ENCODE measurements at regions of chr3 and their contacts with region 1.

Region 1: DNA sequence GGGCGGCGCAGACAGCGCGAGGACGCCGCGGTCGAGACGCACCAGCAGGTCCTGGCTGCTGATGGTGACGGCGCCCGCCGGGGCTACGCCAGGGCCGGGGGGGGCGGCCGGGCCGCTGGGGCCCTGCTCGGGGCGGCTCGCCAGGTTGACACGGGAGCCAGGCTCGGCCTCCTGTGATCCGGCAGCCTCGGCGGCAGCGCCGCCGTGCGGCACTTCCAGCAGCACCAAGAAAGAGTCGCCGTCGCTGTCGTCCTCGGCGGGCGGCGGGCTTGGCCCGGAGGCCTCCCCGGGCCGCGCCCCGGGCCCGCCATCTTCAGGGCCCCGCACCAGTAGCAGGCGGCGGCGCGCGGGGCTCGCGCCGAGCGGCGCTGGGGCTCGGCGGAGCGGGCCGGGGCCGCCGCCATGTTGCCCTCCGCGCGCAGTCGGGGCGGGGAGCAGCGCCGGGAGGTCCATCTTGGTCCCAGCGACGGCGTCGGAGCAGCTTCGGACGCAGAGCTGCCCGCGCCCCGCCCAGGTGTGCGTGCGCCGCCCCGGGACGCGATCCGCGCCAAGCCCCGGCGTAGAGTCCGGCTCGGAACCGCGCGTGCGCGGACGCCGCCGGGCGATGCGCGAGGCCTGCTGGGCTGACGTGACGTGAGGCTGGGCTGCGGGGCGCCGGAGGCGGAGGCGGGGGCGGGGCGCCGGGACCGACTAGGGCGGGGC is at the start of gene ZXDC:
- DNase-seq: peak; percentile 69 to 97
- H3K4me3 ChIP-seq: peak within 1 kb of the TSS; percentile 63 to 71
- H3K27ac ChIP-seq: peak within 1 kb of the TSS; percentile 88 to 99
- H3K4me1 ChIP-seq: peaks cover 27 to 35% of the 10 kb centered on the region in 2 donors
- H3K27me3 ChIP-seq: no peaks in the 10 kb centered on the region
- CTCF ChIP-seq: peak; percentile 14 to 49 (median 37)
- total RNA-seq, gene ZXDC: 74.4 TPM

Region 2: GRCh38 chr3:125916376-125916978 is 559.1 kb before region 1 on chr3:
- intact Hi-C with region 1: loop called (anchors 5 kb)
- DNase-seq: no peak
- H3K4me3 ChIP-seq: peak overlapping the region; percentile 90 to 91
- H3K27ac ChIP-seq: peak overlapping the region; percentile 61 to 67
- H3K4me1 ChIP-seq: peaks cover 0 to 6% of the 10 kb centered on the region in 2 donors
- H3K27me3 ChIP-seq: no peaks in the 10 kb centered on the region
- CTCF ChIP-seq: peak in 1 of 3 experiments; percentile 35

Region 3: GRCh38 chr3:126100634-126101301 is 374.8 kb before region 1 on chr3:
- intact Hi-C with region 1: loop called (anchors 5 kb)
- DNase-seq: peak in 1 of 2 donors; percentile 86
- H3K4me3 ChIP-seq: peak overlapping the region in 1 of 2 donors; percentile 48
- H3K27ac ChIP-seq: peak overlapping the region; percentile 96 to 98
- H3K4me1 ChIP-seq: peaks cover 24 to 46% of the 10 kb centered on the region in 2 donors
- H3K27me3 ChIP-seq: no peaks in the 10 kb centered on the region
- CTCF ChIP-seq: no peak

Region 4: GRCh38 chr3:126212602-126213378 is 262.8 kb before region 1 on chr3:
- intact Hi-C with region 1: loop called (anchors 5 kb)
- DNase-seq: peak in 1 of 2 donors; percentile 77
- H3K4me3 ChIP-seq: peak overlapping the region; percentile 41 to 69
- H3K27ac ChIP-seq: peak overlapping the region; percentile 86 to 89
- H3K4me1 ChIP-seq: peaks cover 9 to 33% of the 10 kb centered on the region in 2 donors
- H3K27me3 ChIP-seq: no peaks in the 10 kb centered on the region
- CTCF ChIP-seq: peak; percentile 43 to 70 (median 68)

Region 5: GRCh38 chr3:126357295-126358037 is 118.1 kb before region 1 on chr3 and contains the start of gene KLF15:
- intact Hi-C with region 1: loop called (anchors 2 kb)
- DNase-seq: peak; percentile 38 to 95
- H3K4me3 ChIP-seq: peak within 1 kb of the TSS; percentile 91 to 97
- H3K27ac ChIP-seq: peak within 1 kb of the TSS; percentile 98 to 99
- H3K4me1 ChIP-seq: peaks cover 8 to 35% of the 10 kb centered on the region in 2 donors
- H3K27me3 ChIP-seq: no peaks in the 10 kb centered on the region
- CTCF ChIP-seq: no peak
- total RNA-seq, gene KLF15: 74.0 TPM

Region 6: DNA sequence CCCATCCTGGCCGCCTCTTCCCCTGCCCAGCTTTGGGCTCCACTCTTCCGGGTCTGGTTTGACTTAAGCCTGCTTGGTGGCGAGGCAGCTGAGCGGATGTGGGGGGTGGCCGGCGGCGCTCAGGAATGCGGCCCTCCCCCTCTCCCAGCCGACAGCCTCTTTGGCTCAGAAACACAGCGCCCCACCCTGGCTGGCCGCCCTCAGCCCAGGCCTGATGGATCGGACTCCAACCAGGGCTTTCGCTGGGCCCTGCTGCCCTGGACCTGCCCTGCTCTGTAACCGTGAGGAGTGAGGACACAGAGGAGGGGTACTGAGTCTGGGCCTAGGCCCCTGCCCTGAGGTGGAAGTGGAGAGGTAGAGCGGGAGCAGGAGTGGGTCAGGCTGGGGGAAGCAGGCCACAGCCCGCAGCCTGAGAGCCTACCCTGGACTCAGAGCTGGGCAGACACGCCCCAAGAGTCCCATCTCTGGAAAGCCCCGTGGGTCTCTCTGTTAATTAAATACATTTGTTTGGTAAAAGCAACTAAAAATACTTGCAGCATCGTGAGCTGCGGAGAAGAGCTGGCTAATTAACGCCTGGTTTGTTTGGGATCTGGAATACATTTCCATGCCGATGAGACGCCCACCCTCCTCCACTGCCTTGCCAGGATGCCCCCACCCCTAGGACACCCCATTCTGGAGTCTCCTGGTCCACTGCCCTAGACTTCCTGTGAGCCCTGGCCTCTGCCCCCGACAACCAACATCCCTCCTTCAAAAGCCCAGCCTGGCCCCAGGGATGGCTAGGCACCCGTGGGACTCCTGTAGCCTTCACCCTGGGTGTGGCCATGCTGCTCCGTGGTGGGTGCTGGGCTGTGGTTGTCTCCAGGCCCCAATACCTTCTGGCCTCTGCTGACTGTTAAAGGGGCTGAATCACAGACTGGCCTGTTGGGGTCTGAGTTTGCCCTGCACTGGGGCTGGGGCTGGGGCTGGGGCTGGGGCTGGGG is 526.9 kb after region 1 on chr3:
- intact Hi-C with region 1: loop called (anchors 10 kb)
- DNase-seq: peak; percentile 38 to 95
- H3K4me3 ChIP-seq: peak overlapping the region in 1 of 2 donors; percentile 38
- H3K27ac ChIP-seq: peak overlapping the region; percentile 85 to 95
- H3K4me1 ChIP-seq: peaks cover 26 to 70% of the 10 kb centered on the region in 2 donors
- H3K27me3 ChIP-seq: no peaks in the 10 kb centered on the region
- CTCF ChIP-seq: peak; percentile 8 to 61 (median 52)

Measured in ascending aorta (tissue), 2 donors.